ENCODE measurements at regions of chr9 and their contacts with region 1.

Region 1: DNA sequence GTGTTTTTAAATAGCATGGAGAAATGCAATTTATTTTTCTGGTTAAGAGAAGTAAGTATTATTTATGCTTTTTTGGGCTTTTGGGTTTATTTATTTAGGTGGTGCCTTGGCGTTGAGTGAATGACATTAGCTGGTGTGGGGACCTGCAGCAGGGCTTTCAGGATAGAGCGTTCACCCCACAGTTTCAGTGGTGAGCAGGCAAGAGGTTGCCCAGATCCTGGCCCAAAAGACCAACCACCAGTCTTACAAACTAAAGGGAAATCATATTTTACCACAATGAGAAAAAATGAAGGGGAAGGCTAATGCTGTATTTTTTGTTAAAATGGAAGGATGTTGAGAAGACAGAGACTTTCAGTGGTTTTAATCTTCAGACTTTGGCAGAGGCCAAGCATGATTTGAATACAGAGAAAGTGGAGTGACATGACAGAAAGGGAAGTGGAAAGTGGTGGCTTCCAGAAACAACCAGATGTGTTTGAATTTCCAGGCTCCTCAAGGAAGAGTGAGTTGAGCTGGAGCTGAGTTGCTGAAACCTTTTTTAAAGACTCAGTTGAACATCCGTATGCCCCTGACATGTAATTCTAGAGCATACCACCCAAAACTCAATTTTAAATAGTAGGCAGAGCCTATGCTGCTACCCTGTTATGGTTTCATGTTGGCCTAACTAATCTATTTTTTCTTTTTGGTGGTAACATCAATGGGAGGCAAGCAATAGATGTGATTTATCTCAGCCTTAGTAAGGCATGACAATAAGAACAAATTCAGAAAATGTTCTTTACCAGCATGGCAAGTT is 94.8 kb downstream of the AOPEP start:
- DNase-seq: no peak
- ATAC-seq: no peak

Region 2: DNA sequence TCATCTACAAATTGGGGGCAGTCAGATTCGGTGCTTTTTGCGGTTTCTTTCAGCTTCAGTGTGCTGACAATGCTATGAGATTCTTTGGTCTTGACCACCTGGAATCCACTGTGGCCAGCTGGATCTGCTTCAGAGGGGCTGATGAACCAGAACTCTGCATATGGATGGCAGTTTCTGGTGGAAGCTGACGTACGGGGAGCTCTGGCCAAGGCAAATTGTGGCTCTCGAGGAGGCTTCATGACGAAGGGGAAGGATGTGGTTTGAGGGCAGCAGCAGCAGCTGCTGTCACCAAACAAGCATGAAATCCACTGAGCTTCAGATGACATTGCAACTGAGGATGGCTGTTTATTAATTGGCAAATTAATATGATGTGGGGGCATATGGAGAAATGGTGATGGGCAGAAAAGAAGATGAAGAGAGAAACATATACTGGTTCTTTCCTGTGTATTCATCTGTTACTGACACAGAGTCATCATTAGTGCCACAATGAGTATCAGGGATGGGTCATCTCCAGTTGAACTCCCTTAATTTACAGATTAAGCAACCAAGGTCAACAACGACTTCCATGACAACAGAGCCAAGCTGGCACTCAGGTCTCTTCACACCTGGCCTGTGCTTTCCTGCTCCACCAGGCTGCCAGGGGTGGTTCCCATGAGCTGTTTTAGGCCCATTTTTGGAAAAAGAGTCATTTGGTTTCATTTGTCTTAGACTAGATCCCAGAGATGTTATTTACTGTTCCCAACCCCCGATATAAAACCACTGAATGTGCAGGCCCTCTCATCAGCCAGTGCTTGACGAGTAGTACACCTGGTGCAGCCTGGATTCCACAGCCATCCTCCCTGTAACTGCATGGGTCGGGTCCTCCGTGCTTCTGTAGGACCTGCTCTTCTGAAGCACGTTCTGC is 39.9 kb after region 1 on chr9:
- intact Hi-C with region 1: loop called in 1 of 2 experiments (anchors 5 kb)
- DNase-seq: no peak
- ATAC-seq: peak; percentile 6 to 53

Region 3: DNA sequence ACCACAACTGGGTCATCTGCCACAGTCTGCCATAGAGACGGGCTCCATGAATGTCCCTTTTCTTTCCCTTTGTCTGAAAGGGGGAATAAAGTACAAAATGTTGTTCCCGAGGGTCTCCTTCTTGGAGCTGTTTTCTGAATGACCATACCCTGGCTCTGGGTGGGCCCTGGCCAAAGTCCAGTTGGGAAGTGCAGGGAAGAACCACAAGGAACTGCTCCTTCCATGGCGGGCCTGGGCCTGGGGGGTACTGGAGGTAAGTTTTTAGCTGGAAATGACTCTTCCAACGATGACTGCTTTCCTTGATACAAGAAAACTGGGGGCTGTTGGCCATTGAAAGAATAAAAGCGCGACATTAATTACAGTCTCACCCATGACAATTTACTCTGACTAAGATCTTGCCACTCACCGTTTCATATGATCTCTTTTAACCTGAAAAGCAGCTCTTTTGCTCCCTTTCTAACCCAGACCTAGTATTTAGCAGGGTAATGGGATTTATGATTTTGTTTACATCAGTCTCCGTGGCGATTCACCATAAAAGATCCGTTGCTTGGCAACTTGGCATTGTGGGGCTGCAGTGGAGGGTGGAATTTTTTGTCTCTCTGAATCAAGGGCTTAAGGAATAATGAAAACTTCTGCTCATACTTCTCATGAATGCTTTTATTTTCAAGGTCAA is 784.7 kb after region 1 on chr9:
- intact Hi-C with region 1: no loop called
- DNase-seq: no peak
- ATAC-seq: no peak

Measured in left cardiac atrium (tissue), 4 donors.